WTC11 (cell line): ENCODE measurements at regions of chr19 and their contacts with region 1.

Region 1: GRCh38 chr19:3429581-3430080 is 50.7 kb downstream of the SMIM24 start:
- DNase-seq: peak; percentile 94
- ATAC-seq: peak; percentile 90
- H3K4me3 Mint-ChIP-seq: no peak overlapping the region
- H3K27ac Mint-ChIP-seq: no peak overlapping the region
- H3K4me1 Mint-ChIP-seq: peaks cover 6% of the 10 kb centered on the region
- H3K27me3 Mint-ChIP-seq: peaks cover 8% of the 10 kb centered on the region
- CTCF ChIP-seq: peak; percentile 99

Region 2: DNA sequence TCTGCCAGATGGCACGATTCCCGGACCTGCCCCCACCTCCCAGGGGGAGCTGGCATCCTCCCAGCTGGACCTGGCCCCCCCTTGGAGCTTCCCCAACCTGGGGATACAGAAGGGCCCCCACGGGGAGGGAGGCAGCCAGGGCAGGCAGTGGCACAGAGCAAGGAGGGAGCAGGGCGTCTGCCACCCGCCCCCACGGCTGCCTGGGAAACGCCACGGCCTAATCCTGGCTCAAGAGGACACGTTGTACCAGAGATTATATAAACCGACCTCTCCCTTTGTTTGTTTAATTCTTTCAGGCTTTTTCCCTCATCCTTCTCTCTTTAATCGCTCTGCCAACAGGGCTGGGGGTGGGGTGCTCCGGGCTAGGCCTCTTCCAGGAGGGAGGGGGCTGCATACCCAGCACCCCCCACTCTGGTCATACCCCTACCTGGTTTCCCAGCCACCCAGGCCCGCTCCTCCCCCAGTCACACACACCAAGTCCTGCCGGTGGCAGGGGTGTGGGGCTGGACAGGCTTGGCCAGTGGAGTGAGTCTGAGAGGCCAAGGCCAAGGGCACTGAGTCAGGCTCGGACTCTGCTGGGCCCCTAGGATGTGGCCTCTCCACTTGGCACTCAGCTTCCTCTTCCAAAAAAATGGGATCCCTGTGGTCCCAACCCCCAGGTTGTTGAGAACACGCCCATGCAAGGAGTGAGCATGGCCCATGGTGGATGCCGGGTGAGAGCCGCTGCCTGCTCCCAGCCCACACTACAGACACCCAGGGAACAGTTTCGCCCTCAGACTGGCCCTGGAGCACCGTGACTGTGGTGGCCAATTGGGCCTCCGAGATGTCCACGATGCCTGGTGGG is 92.7 kb before region 1 on chr19:
- CTCF ChIA-PET with region 1: interaction called, 38 read pairs
- POLR2A ChIA-PET with region 1: no interaction called
- DNase-seq: no peak
- ATAC-seq: no peak
- H3K4me3 Mint-ChIP-seq: no peak overlapping the region
- H3K27ac Mint-ChIP-seq: no peak overlapping the region
- H3K4me1 Mint-ChIP-seq: no peaks in the 10 kb centered on the region
- H3K27me3 Mint-ChIP-seq: peaks cover 29% of the 10 kb centered on the region
- CTCF ChIP-seq: no peak

Region 3: DNA sequence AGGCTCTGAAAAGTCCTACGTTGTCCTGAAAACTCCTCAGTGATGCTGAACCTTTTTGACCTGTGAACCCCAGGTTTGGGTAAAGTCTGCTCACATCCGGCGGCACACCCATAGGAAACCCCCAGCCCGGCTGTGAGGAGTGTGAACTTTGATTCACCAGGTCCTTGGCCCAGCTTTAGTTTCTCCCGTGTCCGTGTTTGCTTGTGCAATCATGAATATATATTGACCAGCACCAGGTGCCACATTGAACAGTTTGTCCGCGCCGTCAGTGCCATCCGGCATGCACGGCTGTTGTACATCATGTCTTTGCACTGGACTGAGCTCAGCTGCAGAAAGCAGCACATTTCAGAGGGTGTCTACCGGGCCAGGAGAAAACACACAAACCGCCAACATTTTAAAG is 18.0 kb before region 1 on chr19:
- CTCF ChIA-PET with region 1: interaction called, 46 read pairs
- POLR2A ChIA-PET with region 1: no interaction called
- DNase-seq: no peak
- ATAC-seq: no peak
- H3K4me3 Mint-ChIP-seq: no peak overlapping the region
- H3K27ac Mint-ChIP-seq: no peak overlapping the region
- H3K4me1 Mint-ChIP-seq: 0 out of 2 replicates have a peak, but pooled peaks cover 2% of the 10 kb centered on the region
- H3K27me3 Mint-ChIP-seq: peaks cover 2% of the 10 kb centered on the region
- CTCF ChIP-seq: no peak

Region 4: GRCh38 chr19:3445709-3446108 is 16.1 kb after region 1 on chr19:
- CTCF ChIA-PET with region 1: interaction called, 21 read pairs
- POLR2A ChIA-PET with region 1: no interaction called
- DNase-seq: no peak
- ATAC-seq: no peak
- H3K4me3 Mint-ChIP-seq: no peak overlapping the region
- H3K27ac Mint-ChIP-seq: no peak overlapping the region
- H3K4me1 Mint-ChIP-seq: peaks cover 12% of the 10 kb centered on the region
- H3K27me3 Mint-ChIP-seq: no peaks in the 10 kb centered on the region
- CTCF ChIP-seq: no peak

Region 5: DNA sequence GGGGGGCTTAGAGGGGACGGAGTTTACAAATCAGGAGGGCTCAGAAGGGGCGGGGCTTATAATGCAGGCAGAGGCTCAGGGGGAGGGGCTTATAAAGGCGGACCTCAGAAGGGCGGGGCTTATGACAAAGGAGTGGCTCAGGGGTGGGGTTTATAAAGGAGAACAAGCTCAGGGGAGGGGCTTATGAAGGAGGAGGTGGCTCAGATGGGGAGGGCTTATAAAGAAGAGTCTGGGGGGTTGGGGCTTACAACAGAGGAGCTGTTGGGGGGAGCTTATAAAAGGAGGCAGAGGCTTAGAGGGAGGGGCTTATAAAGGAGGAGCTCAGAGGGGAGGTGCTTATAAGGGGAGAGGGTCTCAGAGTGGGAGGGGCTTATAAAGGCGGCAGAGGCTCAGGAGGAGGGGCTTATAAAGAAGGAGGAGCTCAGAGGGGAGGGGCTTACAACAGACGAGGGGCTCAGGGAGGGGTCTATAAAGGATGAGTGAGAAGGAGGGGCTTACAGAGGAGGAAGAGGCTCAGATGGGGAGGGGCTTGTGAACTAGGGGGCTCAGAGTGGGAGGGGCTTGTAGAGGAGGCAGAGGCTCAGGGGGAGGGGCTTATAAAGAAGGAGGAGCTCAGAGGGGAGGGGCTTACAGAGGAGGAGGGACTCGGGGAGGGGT is 49.7 kb after region 1 on chr19:
- CTCF ChIA-PET with region 1: interaction called, 15 read pairs
- POLR2A ChIA-PET with region 1: no interaction called
- DNase-seq: peak; percentile 79
- ATAC-seq: peak; percentile 47
- H3K4me3 Mint-ChIP-seq: no peak overlapping the region; the same call in 1 of the 2 replicates
- H3K27ac Mint-ChIP-seq: no peak overlapping the region
- H3K4me1 Mint-ChIP-seq: peaks cover 20% of the 10 kb centered on the region
- H3K27me3 Mint-ChIP-seq: peaks cover 6% of the 10 kb centered on the region
- CTCF ChIP-seq: no peak